ENCODE measurements at regions of chr1 and their contacts with region 1.

Region 1: DNA sequence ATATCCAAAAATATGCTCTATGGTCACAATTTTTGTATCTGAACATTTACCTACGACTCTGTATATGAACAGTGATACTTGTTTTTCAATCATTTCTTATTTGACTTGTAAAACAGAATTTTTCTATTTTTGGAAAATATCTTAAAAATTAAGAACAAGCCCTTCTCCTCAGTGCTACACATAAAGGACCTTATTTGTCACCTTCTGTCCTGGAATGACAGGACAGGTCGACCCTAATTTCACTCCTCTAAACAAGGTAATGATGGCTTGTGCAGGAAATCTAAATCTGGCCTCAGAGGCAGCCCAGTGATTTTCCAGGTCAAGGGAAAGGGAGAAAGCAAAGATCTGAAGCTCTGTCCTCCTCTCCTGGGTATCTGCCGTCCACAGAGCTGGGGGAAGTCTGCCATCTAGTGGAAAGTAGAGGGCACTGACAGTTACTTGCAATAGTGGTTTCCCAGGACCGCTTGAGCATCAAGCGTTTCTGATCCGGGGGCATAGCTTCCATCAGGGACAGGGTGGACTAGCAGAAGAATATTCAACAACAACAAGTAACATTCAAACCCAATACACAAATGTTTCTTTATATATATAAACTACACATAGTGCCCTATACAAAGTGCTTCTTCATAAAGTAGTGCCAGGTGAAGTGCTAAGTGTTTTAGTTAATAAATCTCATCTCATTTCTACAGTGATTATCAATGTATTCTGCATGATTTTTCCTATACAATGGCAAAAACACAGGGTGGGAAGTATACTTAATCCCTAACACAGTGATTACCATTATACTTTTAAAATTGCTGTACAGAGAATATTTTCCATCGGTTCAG is 74.6 kb downstream of the SLC25A24 start:
- DNase-seq: peak; percentile 30 to 49
- ATAC-seq: peak; percentile 89 to 97
- H3K4me3 ChIP-seq: no peak overlapping the region
- H3K27ac ChIP-seq: no peak overlapping the region
- H3K4me1 ChIP-seq: no peaks in the 10 kb centered on the region
- H3K27me3 ChIP-seq: no peaks in the 10 kb centered on the region
- CTCF ChIP-seq: peak; percentile 79 to 94 (median 88)
- POLR2A ChIP-seq: no peak

Region 2: DNA sequence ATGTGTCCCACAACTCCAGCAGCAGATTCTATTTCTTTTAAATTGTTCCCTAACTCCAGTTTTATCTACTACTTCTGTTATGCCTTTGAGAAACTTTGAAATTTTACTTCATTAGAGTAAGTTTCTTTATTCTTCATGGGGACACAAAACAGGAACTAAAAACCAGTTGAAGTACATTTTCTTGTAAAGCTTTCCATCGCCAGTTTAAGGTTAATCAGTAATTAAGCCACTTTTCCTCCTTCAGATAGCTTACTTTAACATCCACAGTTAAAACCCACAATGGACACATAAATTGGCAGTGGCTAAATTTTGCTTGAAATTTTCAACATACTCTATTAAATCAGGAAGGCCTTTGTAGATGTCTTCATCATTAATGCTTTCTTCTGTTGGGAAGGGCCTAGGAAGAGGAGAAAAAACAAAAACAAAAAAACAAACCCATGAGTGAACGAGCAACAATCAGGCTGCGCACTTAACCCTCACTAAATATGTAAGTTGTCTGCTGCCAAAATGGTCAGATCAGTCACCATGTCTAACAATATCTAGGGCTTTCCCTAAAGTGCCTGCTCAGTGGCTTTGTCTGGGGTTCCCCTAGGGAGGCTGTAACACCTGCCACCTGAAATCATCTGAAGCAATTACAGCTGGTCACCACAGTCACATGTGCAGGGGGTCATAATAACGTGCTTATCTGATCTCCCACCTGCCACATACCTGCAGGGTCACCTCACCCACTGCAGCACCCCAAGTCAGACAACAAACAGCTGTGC is 348.4 kb before region 1 on chr1:
- in situ Hi-C with region 1: loop called in 3 of 4 experiments (anchors 5 kb)
- intact Hi-C with region 1: loop called (anchors 1 kb)
- DNase-seq: no peak
- ATAC-seq: no peak
- H3K4me3 ChIP-seq: no peak overlapping the region
- H3K27ac ChIP-seq: no peak overlapping the region
- H3K4me1 ChIP-seq: no peaks in the 10 kb centered on the region
- H3K27me3 ChIP-seq: no peaks in the 10 kb centered on the region
- CTCF ChIP-seq: no peak
- POLR2A ChIP-seq: no peak

Region 3: DNA sequence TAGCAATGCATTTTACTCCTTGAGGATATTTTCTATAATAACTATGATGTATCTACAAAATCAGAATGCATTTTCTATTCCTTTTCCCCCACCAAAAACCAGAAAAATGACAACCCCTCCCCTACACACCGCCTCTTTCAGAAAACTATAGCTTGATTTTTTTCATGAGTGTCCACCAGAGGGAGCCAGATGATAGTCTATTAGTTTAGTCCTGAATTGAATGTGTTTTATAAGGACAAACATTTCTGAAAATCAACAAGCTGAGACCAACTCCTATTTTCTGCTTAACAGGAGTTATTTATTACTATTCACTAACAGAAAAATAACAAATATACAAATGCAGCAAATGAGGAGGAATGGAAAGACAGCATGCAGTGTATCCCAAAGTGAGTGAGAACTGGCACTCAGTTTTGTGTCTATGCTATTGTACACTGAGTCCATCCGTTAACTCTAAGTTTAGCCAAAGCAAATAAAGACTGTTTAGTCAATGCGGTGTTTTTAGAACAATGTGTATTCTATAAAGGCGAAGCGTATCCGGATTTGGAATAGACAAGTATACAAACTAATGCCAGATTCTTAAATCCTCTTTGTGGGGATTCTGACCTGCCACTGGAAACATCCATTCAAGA is 343.2 kb before region 1 on chr1:
- in situ Hi-C with region 1: loop called (anchors 5 kb)
- intact Hi-C with region 1: loop called (anchors 1 kb)
- DNase-seq: no peak
- ATAC-seq: peak; percentile 65 to 70
- H3K4me3 ChIP-seq: no peak overlapping the region
- H3K27ac ChIP-seq: no peak overlapping the region
- H3K4me1 ChIP-seq: no peaks in the 10 kb centered on the region
- H3K27me3 ChIP-seq: no peaks in the 10 kb centered on the region
- CTCF ChIP-seq: peak; percentile 59 to 75 (median 67)
- POLR2A ChIP-seq: no peak

Region 4: DNA sequence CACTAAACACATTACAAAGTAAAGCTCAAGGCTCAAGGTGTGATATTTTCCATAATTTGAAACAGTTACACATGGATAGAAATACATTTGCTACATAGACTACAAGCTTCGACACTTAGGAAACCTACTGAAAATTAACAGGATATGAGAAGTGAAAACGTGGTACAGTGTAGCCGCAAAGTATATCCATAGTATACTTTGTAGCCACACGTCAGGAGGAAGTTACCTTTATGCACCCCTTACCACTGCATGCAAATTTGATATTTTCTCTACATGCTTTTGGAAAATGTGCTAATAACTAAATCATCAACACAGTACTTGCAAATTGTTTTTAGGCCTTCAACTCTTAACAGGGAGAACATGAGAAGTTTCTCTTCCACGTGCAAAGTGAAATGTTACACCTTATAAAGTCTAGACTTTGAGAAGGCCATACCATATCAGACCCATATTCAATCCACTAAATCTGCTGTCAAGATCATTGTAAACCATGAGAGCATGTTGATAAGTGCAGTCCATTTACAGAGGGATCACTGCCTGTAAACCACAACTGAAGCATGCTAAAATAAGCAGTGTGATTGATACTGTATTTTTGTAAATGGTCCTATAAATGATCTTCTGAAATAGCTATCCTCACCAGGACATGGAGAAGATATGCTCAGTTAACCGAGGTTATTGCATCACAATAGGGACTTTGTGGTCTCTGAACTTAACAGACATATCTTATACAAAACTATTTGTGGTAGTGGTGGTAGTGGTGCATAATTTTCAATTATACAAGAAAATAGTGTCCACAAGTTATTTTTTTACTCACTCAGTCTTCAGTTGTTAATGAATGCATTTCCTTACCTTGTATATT is 225.2 kb before region 1 on chr1:
- in situ Hi-C with region 1: no loop called
- intact Hi-C with region 1: loop called (anchors 10 kb)
- DNase-seq: no peak
- ATAC-seq: no peak
- H3K4me3 ChIP-seq: no peak overlapping the region
- H3K27ac ChIP-seq: no peak overlapping the region
- H3K4me1 ChIP-seq: no peaks in the 10 kb centered on the region
- H3K27me3 ChIP-seq: no peaks in the 10 kb centered on the region
- CTCF ChIP-seq: no peak
- POLR2A ChIP-seq: no peak

Region 5: GRCh38 chr1:107963601-107964335 is 161.8 kb before region 1 on chr1:
- in situ Hi-C with region 1: no loop called
- intact Hi-C with region 1: loop called (anchors 10 kb)
- DNase-seq: no peak
- ATAC-seq: peak in 1 of 2 donors; percentile 17
- H3K4me3 ChIP-seq: peak overlapping the region; percentile 51 to 54 (median 52)
- H3K27ac ChIP-seq: peak overlapping the region in 3 of 4 donors; percentile 16 to 46 (median 32)
- H3K4me1 ChIP-seq: peaks cover 0 to 10% of the 10 kb centered on the region in 2 donors
- H3K27me3 ChIP-seq: peaks cover 14 to 22% (median 14%) of the 10 kb centered on the region in 3 donors
- CTCF ChIP-seq: no peak
- POLR2A ChIP-seq: no peak

Region 6: GRCh38 chr1:108199781-108200570 is 74.5 kb after region 1 on chr1 and contains the start of gene SLC25A24:
- in situ Hi-C with region 1: no loop called
- intact Hi-C with region 1: loop called (anchors 5 kb)
- DNase-seq: peak; percentile 61 to 70
- ATAC-seq: peak; percentile 84
- H3K4me3 ChIP-seq: peak within 1 kb of the TSS; percentile 84 to 97 (median 88)
- H3K27ac ChIP-seq: peak within 1 kb of the TSS; percentile 89 to 97 (median 92)
- H3K4me1 ChIP-seq: peaks cover 19 to 20% of the 10 kb centered on the region in 2 donors
- H3K27me3 ChIP-seq: no peaks in the 10 kb centered on the region
- CTCF ChIP-seq: no peak
- POLR2A ChIP-seq: peak; percentile 63 to 67
- total RNA-seq, gene SLC25A24: 6.8 to 12.3 (median 9.3) TPM

Measured in gastrocnemius medialis (tissue), 4 donors.